Activated T-helper 1 cell treated with anti-CD3 and anti-CD28 coated beads, Interleukin-12 subunit alpha, Interleukin-12 subunit beta, Interleukin-2, Interleukin-4 antibody, amounts not matched to agents 30 ng/mL and 10 ng/mL and 1 ng/mL, durations not matched to agents 14 hours and 24 hours and 36 hours (primary cell): ENCODE measurements at regions of chr7 and their contacts with region 1.

Region 1: DNA sequence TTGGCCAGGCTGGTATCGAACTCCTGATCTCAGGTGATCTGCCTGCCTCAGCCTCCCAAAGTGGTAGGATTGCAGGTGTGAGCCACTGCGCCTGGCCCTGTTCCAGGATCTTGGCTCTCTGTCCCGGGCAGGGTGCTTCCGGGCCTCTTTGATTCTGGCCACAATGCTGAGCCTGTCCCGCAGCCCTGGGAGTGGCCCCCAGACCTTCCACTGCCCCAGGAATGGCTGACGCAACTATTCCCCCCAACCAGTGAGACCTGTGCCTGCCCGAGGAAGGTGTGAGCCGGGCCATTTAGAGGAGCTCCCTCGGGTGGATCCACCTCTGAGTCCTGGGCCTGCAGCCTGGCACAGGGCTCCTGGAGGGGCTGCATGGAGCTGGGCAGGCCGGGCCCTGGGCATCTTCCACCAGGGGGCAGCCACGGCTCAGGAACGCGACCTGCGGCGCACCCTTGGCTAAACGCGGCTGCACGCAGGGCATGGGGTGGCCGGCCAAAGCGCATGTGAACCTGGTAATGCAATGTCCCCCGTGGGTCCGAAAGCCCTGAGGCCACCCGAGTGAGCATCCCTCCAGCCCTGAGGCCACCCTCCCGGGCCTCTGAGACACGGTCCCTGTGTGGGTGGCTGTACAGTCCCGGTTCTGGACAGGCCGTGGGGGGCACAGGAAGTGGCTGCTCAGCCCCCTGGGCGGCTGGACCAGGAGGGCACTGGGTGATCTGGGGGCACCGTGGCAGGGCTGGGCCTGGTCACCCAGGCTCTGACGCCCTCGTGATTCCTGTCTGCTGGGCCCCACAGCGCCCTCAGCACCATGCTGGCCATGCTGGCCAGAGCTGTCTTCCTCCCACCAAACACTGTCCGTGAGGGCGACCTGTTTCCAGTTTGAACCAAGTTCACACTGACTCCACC is 24.8 kb downstream of the GRIFIN start:
- DNase-seq: peak; percentile 54
- H3K4me3 Mint-ChIP-seq: no peak overlapping the region
- H3K27ac Mint-ChIP-seq: no peak overlapping the region
- H3K4me1 Mint-ChIP-seq: no peaks in the 10 kb centered on the region
- H3K27me3 Mint-ChIP-seq: peaks cover 12% of the 10 kb centered on the region

Region 2: GRCh38 chr7:2471396-2471795 is 20.0 kb after region 1 on chr7:
- intact Hi-C with region 1: loop called (anchors 1 kb)
- DNase-seq: no peak
- H3K4me3 Mint-ChIP-seq: no peak overlapping the region
- H3K27ac Mint-ChIP-seq: no peak overlapping the region
- H3K4me1 Mint-ChIP-seq: peaks cover 5% of the 10 kb centered on the region
- H3K27me3 Mint-ChIP-seq: peaks cover 6% of the 10 kb centered on the region

Region 3: DNA sequence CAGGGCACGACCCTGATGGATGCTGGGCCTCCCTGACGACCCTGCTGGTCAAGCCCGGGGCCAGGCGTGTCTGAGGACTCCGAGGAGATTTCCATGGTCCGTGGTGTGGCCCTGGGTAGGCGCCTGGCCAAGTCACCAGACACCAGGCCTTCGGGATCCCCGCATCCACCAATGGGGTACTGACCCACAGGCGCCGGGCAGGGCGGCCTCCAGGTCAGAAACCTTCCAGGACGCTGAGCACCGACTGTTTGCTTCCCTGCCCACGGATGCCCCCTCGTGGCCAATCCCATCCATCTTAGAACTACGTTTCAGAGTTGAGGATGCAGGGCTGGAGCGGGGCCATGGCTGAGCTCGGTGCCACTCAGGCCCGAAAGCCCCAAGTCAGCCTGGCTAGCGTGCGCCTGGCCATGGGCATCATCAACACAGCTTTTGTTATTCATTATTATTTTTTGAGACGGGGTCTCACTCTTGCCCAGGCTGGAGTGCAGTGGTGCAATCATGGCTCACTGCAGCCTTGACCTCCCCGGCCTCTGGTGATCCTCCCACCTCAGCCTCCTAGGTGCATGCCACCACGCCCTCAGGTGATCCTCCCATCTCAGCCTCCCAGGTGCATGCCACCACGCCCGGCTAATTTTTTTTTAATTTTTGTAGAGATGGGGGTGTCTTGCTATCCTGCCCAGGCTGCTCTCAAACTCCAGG is 229.5 kb after region 1 on chr7:
- intact Hi-C with region 1: loop called (anchors 1 kb)
- DNase-seq: peak; percentile 38
- H3K4me3 Mint-ChIP-seq: no peak overlapping the region
- H3K27ac Mint-ChIP-seq: no peak overlapping the region
- H3K4me1 Mint-ChIP-seq: no peaks in the 10 kb centered on the region
- H3K27me3 Mint-ChIP-seq: peaks cover 7% of the 10 kb centered on the region